ENCODE measurements at regions of chr19 and their contacts with region 1.

Region 1: DNA sequence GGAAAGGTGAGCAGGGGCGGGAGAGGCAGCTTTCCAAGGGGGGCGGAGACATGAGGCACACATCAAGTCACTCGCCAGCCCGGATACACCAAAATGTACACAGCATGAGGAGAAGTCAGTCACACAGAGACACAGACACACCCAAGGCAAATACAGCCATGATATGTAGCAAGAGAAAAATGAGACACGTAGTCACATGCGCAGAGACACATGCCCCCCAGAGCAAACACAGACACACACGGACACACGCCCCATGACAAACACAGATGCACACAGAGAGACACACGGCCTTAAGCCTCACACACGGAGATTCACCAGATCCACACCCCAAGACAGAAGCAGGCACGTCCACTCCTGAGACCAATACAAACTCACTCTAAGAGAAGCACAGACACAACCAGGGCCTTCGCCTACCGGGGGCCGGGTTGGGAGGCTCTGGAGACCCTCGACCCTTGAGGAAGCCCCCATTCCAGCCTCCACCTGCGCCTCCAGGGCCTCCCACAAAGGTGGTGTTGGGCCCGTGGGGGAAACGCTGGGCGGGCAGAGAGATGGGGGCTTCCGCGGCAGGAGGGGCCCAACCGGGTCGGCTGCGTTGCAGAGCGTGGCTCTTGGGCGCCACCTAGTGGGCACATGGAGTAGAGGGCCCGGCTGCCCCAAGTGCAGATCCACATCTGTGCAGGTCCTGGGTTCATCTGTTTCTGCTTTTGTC is 10.2 kb upstream of the TINCR start:
- DNase-seq: peak; percentile 73
- H3K4me3 ChIP-seq: peak overlapping the region in 2 of 4 donors; percentile 14 to 41
- H3K27ac ChIP-seq: peak overlapping the region; percentile 1 to 64 (median 32)
- H3K4me1 ChIP-seq: peaks cover 0 to 11% (median 5%) of the 10 kb centered on the region in 4 donors
- H3K27me3 ChIP-seq: no peaks in the 10 kb centered on the region
- CTCF ChIP-seq: peak; percentile 92 to 100 (median 99)
- EP300 ChIP-seq: no peak
- POLR2A ChIP-seq: peak; percentile 31

Region 2: GRCh38 chr19:5048091-5048726 is 529.7 kb before region 1 on chr19:
- in situ Hi-C with region 1: loop called in 1 of 4 experiments (anchors 25 kb)
- intact Hi-C with region 1: loop called (anchors 10 kb)
- DNase-seq: peak; percentile 86
- H3K4me3 ChIP-seq: no peak overlapping the region
- H3K27ac ChIP-seq: peak overlapping the region; percentile 77 to 89 (median 82)
- H3K4me1 ChIP-seq: peaks cover 27 to 44% (median 40%) of the 10 kb centered on the region in 4 donors
- H3K27me3 ChIP-seq: no peaks in the 10 kb centered on the region
- CTCF ChIP-seq: peak; percentile 96 to 100 (median 99)
- EP300 ChIP-seq: no peak
- POLR2A ChIP-seq: no peak

Region 3: GRCh38 chr19:5057861-5058260 is 520.1 kb before region 1 on chr19:
- in situ Hi-C with region 1: loop called in 1 of 4 experiments (anchors 25 kb)
- intact Hi-C with region 1: no loop called
- DNase-seq: no peak
- H3K4me3 ChIP-seq: no peak overlapping the region
- H3K27ac ChIP-seq: no peak overlapping the region
- H3K4me1 ChIP-seq: no peaks in the 10 kb centered on the region
- H3K27me3 ChIP-seq: no peaks in the 10 kb centered on the region
- CTCF ChIP-seq: no peak
- EP300 ChIP-seq: no peak
- POLR2A ChIP-seq: no peak

Region 4: GRCh38 chr19:5216141-5216847 is 361.6 kb before region 1 on chr19:
- in situ Hi-C with region 1: no loop called
- intact Hi-C with region 1: loop called (anchors 10 kb)
- DNase-seq: no peak
- H3K4me3 ChIP-seq: no peak overlapping the region
- H3K27ac ChIP-seq: no peak overlapping the region
- H3K4me1 ChIP-seq: no peaks in the 10 kb centered on the region
- H3K27me3 ChIP-seq: no peaks in the 10 kb centered on the region
- CTCF ChIP-seq: no peak
- EP300 ChIP-seq: no peak
- POLR2A ChIP-seq: no peak

Measured in transverse colon (tissue), 4 donors.